HEK293T (cell line): ENCODE measurements at regions of chrX and their contacts with region 1.

Region 1: GRCh38 chrX:48574270-48575266 is at the start of gene RBM3:
- DNase-seq: peak; percentile 79

Region 2: GRCh38 chrX:48539345-48540027 is 35.1 kb before region 1 on chrX and contains the start of gene TBC1D25:
- CTCF ChIA-PET with region 1: no interaction called
- POLR2A ChIA-PET with region 1: interaction called, 13 read pairs
- DNase-seq: peak; percentile 89

Region 3: GRCh38 chrX:48592971-48593370 is 18.4 kb after region 1 on chrX:
- CTCF ChIA-PET with region 1: no interaction called
- POLR2A ChIA-PET with region 1: interaction called, 16 read pairs
- DNase-seq: no peak

Region 4: GRCh38 chrX:48703642-48704481 is 129.3 kb after region 1 on chrX:
- CTCF ChIA-PET with region 1: no interaction called
- POLR2A ChIA-PET with region 1: no interaction called
- DNase-seq: no peak